Right lobe of liver (tissue), 6 donors: ENCODE measurements at regions of chr19 and their contacts with region 1.

Region 1: DNA sequence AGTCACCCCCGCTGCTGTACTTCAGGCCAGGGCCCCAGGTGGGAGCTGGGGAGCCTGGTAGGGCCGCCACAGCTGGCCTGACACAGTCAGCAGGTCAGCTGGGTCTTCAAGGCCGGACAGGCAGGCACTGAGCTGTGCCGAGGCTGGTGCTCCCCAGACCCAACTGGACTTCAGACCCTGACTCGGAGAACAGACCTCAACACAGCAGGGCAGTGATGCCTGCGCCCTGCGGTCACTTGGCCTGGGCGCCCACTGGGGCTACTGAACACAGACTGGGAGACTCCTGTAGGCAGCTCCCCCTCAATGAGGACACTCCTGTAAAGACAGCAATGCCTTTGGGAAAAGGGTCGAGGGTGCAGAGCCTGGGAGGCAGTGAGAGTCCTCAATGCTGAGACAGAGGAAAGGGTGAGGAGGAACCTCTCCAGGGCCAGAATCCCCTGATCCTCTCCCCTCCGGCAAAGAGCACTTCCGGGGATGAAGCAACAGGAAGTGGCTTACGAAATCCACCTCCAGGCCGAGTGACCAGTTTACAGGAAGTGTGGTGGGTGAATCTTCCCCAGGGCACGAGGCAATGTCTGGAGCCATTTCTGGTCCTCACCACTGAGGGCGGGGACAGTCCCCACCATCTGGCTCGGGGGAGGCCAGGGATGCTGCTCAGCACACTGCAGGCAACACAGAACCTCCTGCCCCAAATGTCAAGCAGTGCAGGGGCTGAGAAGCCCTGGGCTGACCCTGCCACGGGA is 40.8 kb upstream of the ISYNA1 start:
- DNase-seq: peak; percentile 76 to 86 (median 84)
- ATAC-seq: peak; percentile 67 to 82 (median 74)
- H3K4me3 ChIP-seq: no peak overlapping the region
- H3K27ac ChIP-seq: peak overlapping the region; percentile 45 to 75 (median 67)
- H3K4me1 ChIP-seq: peaks cover 0 to 44% (median 19%) of the 10 kb centered on the region in 4 donors
- H3K27me3 ChIP-seq: no peaks in the 10 kb centered on the region
- CTCF ChIP-seq: no peak
- POLR2A ChIP-seq: peak; percentile 53

Region 2: GRCh38 chr19:18562086-18562485 is 83.3 kb after region 1 on chr19:
- intact Hi-C with region 1: loop called in 1 of 2 experiments (anchors 10 kb)
- DNase-seq: no peak
- ATAC-seq: peak in 2 of 4 donors; percentile 8 to 9
- H3K4me3 ChIP-seq: no peak overlapping the region
- H3K27ac ChIP-seq: peak overlapping the region; percentile 20 to 55 (median 26)
- H3K4me1 ChIP-seq: peaks cover 0 to 9% (median 3%) of the 10 kb centered on the region in 4 donors
- H3K27me3 ChIP-seq: no peaks in the 10 kb centered on the region
- CTCF ChIP-seq: no peak
- POLR2A ChIP-seq: no peak

Region 3: DNA sequence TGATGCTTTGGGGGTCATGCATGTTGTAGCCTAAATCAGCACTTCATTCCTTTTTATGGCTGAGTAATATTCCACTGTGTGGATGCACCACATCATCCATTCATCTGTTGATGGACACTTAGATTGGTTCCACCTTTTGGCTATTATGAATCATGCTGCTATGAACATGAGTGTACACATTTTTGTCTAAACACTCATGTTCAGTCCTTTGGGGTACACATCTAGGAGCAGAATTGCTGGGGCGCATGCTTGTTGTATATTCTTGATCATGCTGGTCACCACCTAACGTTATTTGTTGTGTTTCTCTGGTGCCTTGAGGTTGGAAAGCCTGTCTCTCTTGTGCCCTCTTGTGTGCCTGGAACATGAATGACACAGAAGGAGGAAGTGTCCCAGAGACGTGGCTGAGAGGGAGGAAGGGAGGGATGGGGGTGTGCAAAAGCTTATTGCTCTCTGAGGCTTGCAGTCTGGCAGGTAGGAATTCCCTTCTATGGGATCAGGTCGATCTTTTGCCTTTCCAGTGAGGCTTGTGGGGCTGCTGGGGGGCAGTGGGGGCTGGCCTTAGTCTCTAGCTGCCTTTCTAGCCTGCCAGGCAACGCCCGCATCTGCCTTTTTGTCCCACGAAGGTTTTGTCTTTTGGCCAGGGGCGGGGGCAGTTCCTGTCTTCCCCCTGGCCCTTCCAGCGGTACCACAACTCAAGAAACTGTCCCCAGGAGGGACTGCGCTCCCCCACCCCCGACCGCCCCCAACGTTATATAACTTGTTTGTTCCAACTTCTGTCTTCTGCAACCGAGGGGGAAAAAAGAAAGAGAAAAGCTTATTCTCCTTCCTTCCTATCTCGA is 165.7 kb after region 1 on chr19:
- intact Hi-C with region 1: no loop called
- DNase-seq: no peak
- ATAC-seq: peak; percentile 28 to 62 (median 42)
- H3K4me3 ChIP-seq: no peak overlapping the region
- H3K27ac ChIP-seq: no peak overlapping the region
- H3K4me1 ChIP-seq: no peaks in the 10 kb centered on the region
- H3K27me3 ChIP-seq: no peaks in the 10 kb centered on the region
- CTCF ChIP-seq: no peak
- POLR2A ChIP-seq: no peak